ENCODE measurements at regions of chr4 and their contacts with region 1.

Region 1: DNA sequence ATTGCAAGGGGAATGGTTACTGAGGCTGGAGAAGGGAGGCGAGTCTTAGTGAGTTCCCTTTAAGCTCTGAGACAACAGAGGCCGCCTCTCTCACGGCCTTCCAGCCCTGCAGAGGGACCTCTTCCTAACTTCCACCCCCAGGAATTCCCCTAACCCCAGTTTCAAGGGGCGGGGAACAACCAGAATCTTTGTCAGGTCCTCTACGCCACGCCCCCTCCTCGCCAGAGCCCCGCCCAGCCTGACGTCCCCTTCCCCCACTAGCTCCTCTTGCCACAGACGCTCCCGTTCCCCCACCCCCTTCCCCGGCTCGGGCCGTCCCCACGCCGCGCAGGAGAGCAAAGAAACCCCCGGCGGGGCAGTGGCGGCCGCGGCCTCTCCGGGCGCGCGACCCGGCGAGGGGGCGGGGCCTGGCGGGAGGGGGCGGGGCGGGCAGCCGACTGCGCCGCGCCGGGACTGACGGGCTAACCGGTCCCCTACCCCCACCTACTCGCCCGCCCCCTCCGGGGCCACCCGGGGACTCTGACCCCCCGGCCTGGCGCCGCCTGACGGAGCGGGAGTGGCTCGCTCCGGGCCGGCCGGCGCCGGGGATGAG is 12.3 kb upstream of the TMEM156 start:
- DNase-seq: peak; percentile 95
- H3K4me3 Mint-ChIP-seq: peak overlapping the region; percentile 72
- H3K27ac Mint-ChIP-seq: peak overlapping the region; percentile 73
- H3K4me1 Mint-ChIP-seq: peaks cover 33% of the 10 kb centered on the region
- H3K27me3 Mint-ChIP-seq: no peaks in the 10 kb centered on the region
- CTCF ChIP-seq: no peak

Region 2: DNA sequence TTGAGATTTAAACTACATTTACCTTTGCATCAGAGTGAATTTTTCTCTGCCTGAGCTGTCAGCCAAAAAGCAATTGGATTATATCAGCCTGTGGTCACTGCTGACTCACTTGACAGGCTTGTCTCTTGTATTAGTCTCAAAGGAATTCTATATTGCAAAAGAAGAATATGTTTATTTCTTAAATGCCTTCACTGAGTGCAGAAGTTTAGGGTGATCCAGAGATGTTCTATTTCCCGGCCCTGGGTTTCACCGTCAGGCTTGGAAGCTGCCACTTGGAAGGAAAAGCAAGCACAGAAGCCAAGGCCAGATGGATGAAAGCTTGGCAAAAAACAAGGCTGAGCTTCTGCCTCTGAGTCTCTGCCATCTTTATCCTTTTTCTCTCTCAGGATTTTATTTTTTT is 95.9 kb before region 1 on chr4:
- CTCF ChIA-PET with region 1: interaction called, 3 read pairs
- POLR2A ChIA-PET with region 1: interaction called, 36 read pairs
- intact Hi-C with region 1: loop called (anchors 2 kb)
- DNase-seq: peak; percentile 76
- H3K4me3 Mint-ChIP-seq: no peak overlapping the region
- H3K27ac Mint-ChIP-seq: peak overlapping the region; percentile 11
- H3K4me1 Mint-ChIP-seq: peaks cover 27% of the 10 kb centered on the region
- H3K27me3 Mint-ChIP-seq: no peaks in the 10 kb centered on the region
- CTCF ChIP-seq: no peak

Region 3: GRCh38 chr4:39032218-39033085 is 12.0 kb before region 1 on chr4 and contains the start of gene TMEM156:
- CTCF ChIA-PET with region 1: interaction called, 6 read pairs
- POLR2A ChIA-PET with region 1: interaction called, 51 read pairs
- intact Hi-C with region 1: no loop called
- DNase-seq: peak; percentile 59
- H3K4me3 Mint-ChIP-seq: peak within 1 kb of the TSS; percentile 32
- H3K27ac Mint-ChIP-seq: peak within 1 kb of the TSS; percentile 35
- H3K4me1 Mint-ChIP-seq: peaks cover 12% of the 10 kb centered on the region
- H3K27me3 Mint-ChIP-seq: no peaks in the 10 kb centered on the region
- CTCF ChIP-seq: no peak
- total RNA-seq, gene TMEM156: 5.3 and 7.0 TPM in 2 replicates

Region 4: GRCh38 chr4:39062094-39062769 is 17.8 kb after region 1 on chr4 and contains the start of gene KLHL5:
- CTCF ChIA-PET with region 1: interaction called, 3 read pairs
- POLR2A ChIA-PET with region 1: interaction called, 19 read pairs
- intact Hi-C with region 1: no loop called
- DNase-seq: no peak
- H3K4me3 Mint-ChIP-seq: no peak within 1 kb of the TSS
- H3K27ac Mint-ChIP-seq: no peak within 1 kb of the TSS
- H3K4me1 Mint-ChIP-seq: peaks cover 23% of the 10 kb centered on the region
- H3K27me3 Mint-ChIP-seq: no peaks in the 10 kb centered on the region
- CTCF ChIP-seq: no peak
- total RNA-seq, gene KLHL5: 59.2 and 67.7 TPM in 2 replicates

Region 5: GRCh38 chr4:39134683-39135319 is 90.3 kb after region 1 on chr4:
- CTCF ChIA-PET with region 1: interaction called, 8 read pairs
- POLR2A ChIA-PET with region 1: interaction called, 4 read pairs
- intact Hi-C with region 1: loop called (anchors 5 kb)
- DNase-seq: no peak
- H3K4me3 Mint-ChIP-seq: no peak overlapping the region
- H3K27ac Mint-ChIP-seq: peak overlapping the region; percentile 76
- H3K4me1 Mint-ChIP-seq: no peaks in the 10 kb centered on the region
- H3K27me3 Mint-ChIP-seq: no peaks in the 10 kb centered on the region
- CTCF ChIP-seq: no peak